ENCODE measurements at regions of chr15 and their contacts with region 1.

Region 1: GRCh38 chr15:55799291-55800212 is 56.6 kb upstream of the PRTG start:
- DNase-seq: peak; percentile 73
- H3K4me3 ChIP-seq: no peak overlapping the region; a peak in 1 of 4 replicates
- H3K27ac ChIP-seq: peak overlapping the region in 1 of 2 experiments; percentile 78; a peak in 2 of 4 replicates
- H3K4me1 ChIP-seq: peaks cover 0 to 27% of the 10 kb centered on the region in 2 experiments; a peak in 2 of 4 replicates
- H3K27me3 ChIP-seq: no peaks in the 10 kb centered on the region
- CTCF ChIP-seq: peak; percentile 80
- EP300 ChIP-seq: peak in 1 of 2 experiments; percentile 13; a peak in 1 of 4 replicates
- RAD21 ChIP-seq: peak; percentile 98

Region 2: GRCh38 chr15:55661428-55661827 is 138.1 kb before region 1 on chr15:
- CTCF ChIA-PET with region 1: interaction called, 14 read pairs
- POLR2A ChIA-PET with region 1: no interaction called
- DNase-seq: no peak
- H3K4me3 ChIP-seq: no peak overlapping the region
- H3K27ac ChIP-seq: peak overlapping the region in 1 of 2 experiments; percentile 29; a peak in 1 of 4 replicates
- H3K4me1 ChIP-seq: peaks cover 0 to 3% of the 10 kb centered on the region in 2 experiments; a peak in 2 of 4 replicates
- H3K27me3 ChIP-seq: no peaks in the 10 kb centered on the region
- CTCF ChIP-seq: no peak
- EP300 ChIP-seq: no peak
- RAD21 ChIP-seq: no peak

Region 3: DNA sequence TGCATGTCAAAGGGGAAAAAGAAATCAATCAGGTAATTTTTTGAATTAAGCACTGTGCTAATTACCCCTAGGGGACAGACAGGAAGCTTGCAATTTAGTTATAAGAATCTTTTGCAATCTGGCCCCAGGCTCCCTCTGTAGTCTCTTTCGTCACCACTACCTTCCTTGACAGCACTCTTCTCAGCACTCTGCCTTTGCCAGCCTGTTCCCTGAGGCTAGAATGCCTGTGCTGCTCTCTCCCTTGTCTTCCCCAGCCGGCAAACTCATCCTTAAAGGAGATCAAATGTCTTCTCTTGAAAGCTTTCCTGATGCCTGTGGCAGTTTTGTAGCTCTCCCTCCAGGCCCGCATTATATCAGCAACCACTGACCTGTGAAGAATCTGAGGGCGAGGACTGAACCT is 24.2 kb before region 1 on chr15:
- CTCF ChIA-PET with region 1: interaction called, 23 read pairs
- POLR2A ChIA-PET with region 1: no interaction called
- DNase-seq: peak; percentile 40
- H3K4me3 ChIP-seq: no peak overlapping the region
- H3K27ac ChIP-seq: peak overlapping the region in 1 of 2 experiments; percentile 24; a peak in 1 of 4 replicates
- H3K4me1 ChIP-seq: peaks cover 0 to 11% of the 10 kb centered on the region in 2 experiments; a peak in 2 of 4 replicates
- H3K27me3 ChIP-seq: no peaks in the 10 kb centered on the region
- CTCF ChIP-seq: no peak
- EP300 ChIP-seq: peak in 1 of 2 experiments; percentile 37; a peak in 1 of 4 replicates
- RAD21 ChIP-seq: no peak

Region 4: GRCh38 chr15:55784286-55784685 is 15.3 kb before region 1 on chr15:
- CTCF ChIA-PET with region 1: interaction called, 25 read pairs
- POLR2A ChIA-PET with region 1: no interaction called
- DNase-seq: no peak
- H3K4me3 ChIP-seq: no peak overlapping the region
- H3K27ac ChIP-seq: peak overlapping the region in 1 of 2 experiments; percentile 85; a peak in 2 of 4 replicates
- H3K4me1 ChIP-seq: peaks cover 0 to 23% of the 10 kb centered on the region in 2 experiments; a peak in 2 of 4 replicates
- H3K27me3 ChIP-seq: no peaks in the 10 kb centered on the region
- CTCF ChIP-seq: no peak
- EP300 ChIP-seq: peak in 1 of 2 experiments; percentile 26; a peak in 1 of 4 replicates
- RAD21 ChIP-seq: no peak

Region 5: GRCh38 chr15:55846116-55846707 is 46.7 kb after region 1 on chr15:
- CTCF ChIA-PET with region 1: interaction called, 40 read pairs
- POLR2A ChIA-PET with region 1: no interaction called
- DNase-seq: peak; percentile 65
- H3K4me3 ChIP-seq: no peak overlapping the region; a peak in 1 of 4 replicates
- H3K27ac ChIP-seq: peak overlapping the region in 1 of 2 experiments; percentile 29; a peak in 1 of 4 replicates
- H3K4me1 ChIP-seq: peaks cover 0 to 6% of the 10 kb centered on the region in 2 experiments; a peak in 2 of 4 replicates
- H3K27me3 ChIP-seq: no peaks in the 10 kb centered on the region
- CTCF ChIP-seq: peak; percentile 96
- EP300 ChIP-seq: no peak
- RAD21 ChIP-seq: peak; percentile 89

Region 6: GRCh38 chr15:55907797-55908196 is 108.2 kb after region 1 on chr15:
- CTCF ChIA-PET with region 1: no interaction called
- POLR2A ChIA-PET with region 1: no interaction called
- DNase-seq: peak; percentile 3
- H3K4me3 ChIP-seq: peak overlapping the region; percentile 21 to 25; a peak in 1 of 4 replicates
- H3K27ac ChIP-seq: peak overlapping the region; percentile 74 to 96; a peak in 3 of 4 replicates
- H3K4me1 ChIP-seq: peaks cover 3 to 14% of the 10 kb centered on the region in 2 experiments
- H3K27me3 ChIP-seq: no peaks in the 10 kb centered on the region
- CTCF ChIP-seq: no peak
- EP300 ChIP-seq: peak; percentile 38 to 94; a peak in 3 of 4 replicates
- RAD21 ChIP-seq: no peak

Measured in SK-N-SH (cell line).